Psoas muscle (tissue), 8 donors: ENCODE measurements at regions of chr2 and their contacts with region 1.

Region 1: DNA sequence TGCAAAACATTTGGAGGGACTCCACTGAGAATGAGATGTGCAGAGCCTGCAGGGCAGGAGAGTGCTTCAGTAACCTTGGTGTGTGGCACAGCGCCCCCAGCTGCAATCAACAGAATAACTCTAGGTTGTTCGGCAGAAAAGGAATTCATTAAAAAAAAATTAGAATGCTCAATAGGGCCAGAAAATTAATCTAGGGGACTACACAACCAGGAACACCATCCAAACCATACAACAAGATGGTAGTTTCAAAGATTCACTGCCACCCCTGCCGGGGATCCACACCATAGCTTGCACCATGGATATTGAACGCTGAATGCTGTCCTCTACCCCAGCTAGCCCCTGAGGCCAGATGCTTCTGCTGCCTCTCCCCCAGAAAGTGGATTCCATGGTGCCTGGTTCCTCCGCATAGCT is 50.1 kb downstream of the THUMPD2 start:
- DNase-seq: peak in 1 of 2 donors; percentile 49
- ATAC-seq: peak in 1 of 4 donors; percentile 39
- H3K4me3 ChIP-seq: no peak overlapping the region
- H3K27ac ChIP-seq: no peak overlapping the region
- H3K4me1 ChIP-seq: peaks cover 21% of the 10 kb centered on the region
- H3K27me3 ChIP-seq: no peaks in the 10 kb centered on the region
- CTCF ChIP-seq: peak; percentile 48

Region 2: DNA sequence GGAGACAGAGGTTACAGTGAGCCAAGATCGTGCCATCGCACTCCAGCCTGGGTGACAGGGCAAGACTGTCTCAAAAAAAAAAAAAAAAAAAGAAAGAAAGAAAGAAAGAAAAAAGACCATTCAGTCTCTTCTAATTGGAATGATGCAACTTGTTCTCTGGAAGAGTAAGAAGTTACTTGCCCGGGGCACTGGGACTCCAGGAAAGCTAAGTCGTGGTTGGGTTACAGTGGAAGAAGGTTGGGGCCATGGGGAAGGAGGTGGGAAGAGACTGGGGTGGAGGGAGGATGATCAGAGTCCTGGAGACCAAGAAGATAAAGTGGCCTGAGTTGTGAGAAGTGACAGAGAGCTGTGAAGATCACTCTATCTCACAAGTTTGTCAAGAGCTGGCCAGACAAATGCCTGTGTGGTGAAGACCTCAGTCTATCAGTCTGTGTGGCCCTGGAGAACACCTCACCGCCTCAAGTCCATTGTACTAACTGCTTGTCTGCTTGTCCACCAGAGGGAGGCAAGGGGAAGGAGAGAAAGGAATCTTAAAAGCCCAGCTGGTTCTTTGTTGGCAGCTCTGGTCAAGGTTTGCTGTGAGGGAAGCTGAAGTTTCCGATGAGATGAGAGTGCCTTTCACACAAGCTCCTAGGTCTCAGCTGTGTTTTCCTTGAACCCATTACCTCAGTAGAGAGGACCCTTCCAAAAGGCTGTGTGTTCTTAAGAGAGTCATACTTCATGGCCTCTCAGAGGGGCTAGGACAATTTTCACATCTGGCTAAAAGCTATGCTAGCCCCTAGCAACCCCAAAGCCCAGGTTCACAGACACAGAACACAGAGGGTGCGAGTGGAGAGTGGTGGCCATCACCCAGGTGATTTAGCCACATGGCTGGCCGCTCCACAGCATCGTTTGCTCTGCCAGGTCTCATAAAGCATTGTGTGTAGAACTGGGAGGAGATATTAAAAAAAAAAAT is 135.2 kb before region 1 on chr2:
- intact Hi-C with region 1: loop called in 1 of 2 experiments (anchors 10 kb)
- DNase-seq: no peak
- ATAC-seq: peak; percentile 79 to 95 (median 88)
- H3K4me3 ChIP-seq: no peak overlapping the region
- H3K27ac ChIP-seq: no peak overlapping the region
- H3K4me1 ChIP-seq: peaks cover 3% of the 10 kb centered on the region
- H3K27me3 ChIP-seq: no peaks in the 10 kb centered on the region
- CTCF ChIP-seq: peak; percentile 62